ENCODE measurements at regions of chr1 and their contacts with region 1.

Region 1: DNA sequence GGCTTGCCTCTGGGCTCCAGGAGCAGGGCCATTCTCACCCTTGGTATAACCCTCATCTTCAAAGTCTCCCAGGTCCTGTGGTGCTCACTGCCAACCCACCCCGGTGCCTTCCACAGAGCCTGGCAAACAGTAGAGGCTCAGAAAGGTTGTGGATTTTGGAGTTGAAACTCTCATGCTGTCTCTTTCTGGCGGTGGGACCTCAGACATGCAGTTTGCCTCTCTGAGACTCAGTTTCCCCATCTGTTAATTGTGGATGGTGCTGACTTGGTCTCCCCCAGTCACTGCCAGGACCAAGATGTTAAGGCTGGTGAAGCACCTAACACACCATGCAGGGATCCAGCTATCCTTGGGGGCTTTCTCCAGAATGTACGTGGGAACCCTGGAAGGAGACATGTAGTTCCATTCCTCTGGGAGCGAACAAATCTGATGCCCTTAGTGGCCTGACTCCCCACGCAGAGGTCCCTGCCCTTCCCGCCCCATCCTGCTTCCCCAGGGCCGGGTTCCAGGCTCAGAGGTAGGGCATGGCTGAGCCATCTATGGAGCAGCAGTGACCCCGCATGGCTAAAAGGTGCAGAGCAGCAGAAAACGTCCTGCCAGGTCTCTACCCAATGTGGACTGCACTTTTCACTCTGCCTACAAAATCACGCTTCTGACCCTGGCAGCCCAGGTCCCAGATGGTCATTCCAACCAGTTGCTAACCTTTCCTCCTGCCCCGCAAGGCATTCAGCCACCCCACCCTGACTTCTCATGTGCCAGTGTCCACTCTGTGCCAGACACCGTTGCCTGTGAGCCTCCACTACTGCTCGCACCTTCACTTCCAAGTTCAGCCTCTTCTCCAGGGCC is 9.2 kb upstream of the TTC22 start:
- DNase-seq: peak; percentile 60
- H3K4me3 ChIP-seq: no peak overlapping the region
- H3K27ac ChIP-seq: no peak overlapping the region
- H3K4me1 ChIP-seq: no peaks in the 10 kb centered on the region
- CTCF ChIP-seq: peak; percentile 85

Region 2: GRCh38 chr1:54499360-54500106 is 310.8 kb before region 1 on chr1:
- CTCF ChIA-PET with region 1: no interaction called
- POLR2A ChIA-PET with region 1: no interaction called
- intact Hi-C with region 1: loop called (anchors 5 kb)
- DNase-seq: peak; percentile 48
- H3K4me3 ChIP-seq: peak overlapping the region; percentile 27
- H3K27ac ChIP-seq: no peak overlapping the region
- H3K4me1 ChIP-seq: peaks cover 16% of the 10 kb centered on the region
- CTCF ChIP-seq: peak; percentile 41; the same call in 1 of the 2 replicates

Region 3: GRCh38 chr1:54671985-54672608 is 138.2 kb before region 1 on chr1:
- CTCF ChIA-PET with region 1: no interaction called
- POLR2A ChIA-PET with region 1: no interaction called
- intact Hi-C with region 1: loop called (anchors 1 kb)
- DNase-seq: peak; percentile 53
- H3K4me3 ChIP-seq: no peak overlapping the region
- H3K27ac ChIP-seq: no peak overlapping the region
- H3K4me1 ChIP-seq: no peaks in the 10 kb centered on the region
- CTCF ChIP-seq: peak; percentile 84

Region 4: DNA sequence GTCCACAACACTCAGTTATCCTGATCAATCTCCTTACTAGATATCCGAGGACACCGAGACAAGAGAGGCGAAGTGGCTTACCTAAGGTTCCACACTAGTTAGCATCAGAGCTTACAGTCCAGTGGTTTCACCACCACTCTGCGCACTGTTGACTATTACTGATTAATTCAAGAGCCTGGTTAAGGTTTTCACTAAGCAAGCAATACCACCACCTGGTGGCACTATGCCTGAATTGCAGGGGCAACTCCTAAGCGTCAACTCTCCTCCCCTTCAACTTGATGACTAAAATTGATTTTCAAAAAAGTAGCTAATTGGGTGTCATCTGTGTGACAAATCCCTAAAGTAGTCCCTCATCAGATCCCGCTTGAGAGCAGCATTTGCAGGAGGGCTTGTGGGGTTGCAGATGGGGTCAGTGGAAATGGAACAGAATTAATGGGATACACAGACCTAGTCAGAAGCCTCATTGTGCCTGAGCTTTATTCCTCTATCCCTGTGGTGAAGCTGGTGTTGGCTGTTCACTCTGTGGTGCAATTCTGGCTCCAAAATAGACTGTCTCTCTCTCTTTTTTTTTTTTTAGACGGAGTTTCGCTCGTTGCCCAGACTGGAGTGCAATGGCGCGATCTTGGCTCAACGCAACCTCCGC is 18.3 kb before region 1 on chr1:
- CTCF ChIA-PET with region 1: no interaction called
- POLR2A ChIA-PET with region 1: no interaction called
- intact Hi-C with region 1: no loop called
- DNase-seq: peak; percentile 55
- H3K4me3 ChIP-seq: no peak overlapping the region
- H3K27ac ChIP-seq: no peak overlapping the region
- H3K4me1 ChIP-seq: no peaks in the 10 kb centered on the region
- CTCF ChIP-seq: peak; percentile 91